ENCODE measurements at regions of chr3 and their contacts with region 1.

Region 1: DNA sequence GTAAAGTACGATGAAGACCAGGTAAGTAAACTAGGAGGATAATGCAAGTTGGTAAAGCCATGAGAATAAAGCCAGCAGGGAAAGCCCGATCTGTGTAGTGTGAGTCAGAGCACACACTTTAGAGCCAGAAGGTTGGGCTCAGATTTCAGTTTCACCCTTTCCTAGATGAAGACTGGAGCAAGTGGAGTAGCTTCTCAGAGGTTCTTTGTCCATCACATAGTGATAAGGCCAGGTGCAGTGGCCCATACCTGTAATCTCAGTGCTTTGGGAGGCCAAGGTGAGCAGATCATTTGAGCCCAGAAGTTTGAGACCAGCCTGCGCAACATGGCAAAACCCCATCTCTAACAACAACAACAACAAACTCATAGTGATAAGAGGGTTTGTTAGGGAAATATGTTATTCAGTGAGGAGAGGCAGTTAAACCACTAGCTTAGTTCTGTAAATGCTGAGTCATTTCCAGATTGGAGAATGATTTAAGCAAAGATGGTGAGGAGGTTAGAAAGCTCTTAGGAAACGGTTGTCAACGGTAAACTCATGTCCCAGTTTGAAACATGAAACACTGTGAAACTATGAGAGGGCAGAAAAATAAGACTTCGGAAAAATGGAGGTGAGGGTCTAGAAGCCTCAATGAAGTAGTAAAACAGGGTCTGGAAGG is 39.0 kb downstream of the IL12A start:
- DNase-seq: peak in 1 of 4 experiments; percentile 4
- ATAC-seq: peak; percentile 52
- H3K4me3 ChIP-seq: no peak overlapping the region
- H3K27ac ChIP-seq: no peak overlapping the region
- H3K4me1 ChIP-seq: no peaks in the 10 kb centered on the region; a peak in 2 of 5 replicates
- H3K27me3 ChIP-seq: peaks cover 0 to 6% of the 10 kb centered on the region in 2 experiments
- CTCF ChIP-seq: no peak
- EP300 ChIP-seq: peak; percentile 13
- POLR2A ChIP-seq: no peak
- RAD21 ChIP-seq: no peak

Region 2: GRCh38 chr3:160129459-160130061 is 101.9 kb after region 1 on chr3:
- CTCF ChIA-PET with region 1: no interaction called
- POLR2A ChIA-PET with region 1: no interaction called
- in situ Hi-C with region 1: no loop called
- intact Hi-C with region 1: loop called (anchors 1 kb)
- DNase-seq: no peak
- ATAC-seq: no peak
- H3K4me3 ChIP-seq: no peak overlapping the region
- H3K27ac ChIP-seq: no peak overlapping the region
- H3K4me1 ChIP-seq: no peaks in the 10 kb centered on the region; a peak in 1 of 5 replicates
- H3K27me3 ChIP-seq: 0 out of 5 replicates have a peak, but pooled peaks cover 0 to 3% of the 10 kb centered on the region in 2 experiments
- CTCF ChIP-seq: no peak
- EP300 ChIP-seq: no peak
- POLR2A ChIP-seq: no peak
- RAD21 ChIP-seq: no peak

Region 3: GRCh38 chr3:160343132-160343531 is 315.5 kb after region 1 on chr3:
- CTCF ChIA-PET with region 1: interaction called, 3 read pairs
- POLR2A ChIA-PET with region 1: no interaction called
- in situ Hi-C with region 1: no loop called
- intact Hi-C with region 1: loop called (anchors 2 kb)
- DNase-seq: peak in 2 of 4 experiments; percentile 10 to 12
- ATAC-seq: no peak
- H3K4me3 ChIP-seq: no peak overlapping the region
- H3K27ac ChIP-seq: no peak overlapping the region
- H3K4me1 ChIP-seq: no peaks in the 10 kb centered on the region
- H3K27me3 ChIP-seq: no peaks in the 10 kb centered on the region
- CTCF ChIP-seq: peak in 2 of 3 experiments; percentile 35 to 63; a peak in 3 of 6 replicates
- EP300 ChIP-seq: no peak
- POLR2A ChIP-seq: no peak
- RAD21 ChIP-seq: peak; percentile 82 to 85